Breast epithelium (tissue), 4 donors: ENCODE measurements at regions of chr12 and their contacts with region 1.

Region 1: DNA sequence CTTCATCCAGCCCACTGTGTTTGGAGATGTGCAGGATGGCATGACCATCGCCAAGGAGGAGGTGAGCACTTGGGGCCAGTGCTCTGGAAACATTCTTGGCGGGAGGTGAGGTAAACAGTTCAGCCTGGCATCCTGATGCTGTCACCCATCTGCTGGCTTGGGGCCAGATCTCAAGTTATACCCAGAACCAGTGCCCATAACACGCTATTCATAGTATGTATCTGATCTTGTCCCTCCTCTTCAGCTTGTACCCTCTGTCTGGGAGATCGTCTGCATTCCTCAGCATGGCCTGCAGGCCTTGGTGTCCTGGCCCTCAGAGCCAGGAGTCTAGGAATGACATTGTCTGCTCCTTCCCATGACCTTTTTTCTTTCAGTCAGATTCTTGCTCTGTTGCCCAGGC is 31.4 kb downstream of the ALDH2 start:
- DNase-seq: no peak
- H3K4me3 ChIP-seq: no peak overlapping the region
- H3K27ac ChIP-seq: no peak overlapping the region
- H3K4me1 ChIP-seq: no peaks in the 10 kb centered on the region
- H3K27me3 ChIP-seq: no peaks in the 10 kb centered on the region
- CTCF ChIP-seq: no peak
- POLR2A ChIP-seq: no peak

Region 2: GRCh38 chr12:111748151-111748672 is 50.0 kb before region 1 on chr12:
- intact Hi-C with region 1: loop called (anchors 5 kb)
- DNase-seq: no peak
- H3K4me3 ChIP-seq: no peak overlapping the region
- H3K27ac ChIP-seq: no peak overlapping the region
- H3K4me1 ChIP-seq: no peaks in the 10 kb centered on the region
- H3K27me3 ChIP-seq: no peaks in the 10 kb centered on the region
- CTCF ChIP-seq: no peak
- POLR2A ChIP-seq: no peak